Naive thymus-derived CD4-positive, alpha-beta T cell (primary cell): ENCODE measurements at regions of chr22 and their contacts with region 1.

Region 1: DNA sequence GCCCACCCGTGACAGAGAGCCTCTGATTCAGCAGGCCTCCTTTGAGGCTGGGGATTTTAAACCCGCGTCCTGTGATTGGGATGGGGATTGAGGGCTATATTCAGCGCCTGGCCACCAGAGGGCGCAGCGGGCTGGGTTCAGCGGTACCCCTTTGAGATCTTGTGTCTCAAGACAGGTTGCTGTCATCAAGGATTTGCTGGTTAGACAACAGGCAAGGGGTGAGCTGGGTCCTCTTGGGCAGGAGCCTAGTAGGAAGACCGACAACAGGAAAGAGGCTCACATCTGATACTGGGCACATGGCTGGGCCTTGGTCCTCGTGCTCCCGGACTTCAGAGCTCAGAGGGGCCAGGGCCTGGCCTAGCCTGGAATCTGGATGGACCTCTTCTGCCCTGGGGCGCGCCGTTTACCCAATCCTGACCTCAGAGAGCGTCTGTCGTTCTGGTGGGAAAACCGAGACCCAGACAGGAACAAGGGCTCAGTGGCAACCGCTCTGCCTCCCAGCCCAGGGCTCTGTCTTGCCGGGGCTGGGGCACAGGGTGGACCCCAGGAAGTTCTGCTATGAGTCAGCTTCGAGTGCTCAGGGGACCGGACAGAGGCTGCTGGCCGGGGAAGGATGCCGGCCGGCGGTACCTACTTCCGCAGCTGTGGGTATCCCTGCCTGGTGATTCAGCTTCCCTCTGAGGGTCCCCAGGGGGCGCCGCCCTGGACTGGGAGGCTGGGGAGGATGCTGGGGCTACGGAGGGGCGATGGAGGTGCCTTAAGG is 929 bp upstream of the SLC35E4 start:
- DNase-seq: peak; percentile 79 to 91 (median 88)
- ATAC-seq: peak; percentile 76
- H3K4me3 ChIP-seq: peak overlapping the region; percentile 77
- H3K4me3 Mint-ChIP-seq: peak overlapping the region; percentile 77 to 92 (median 83)
- H3K27ac ChIP-seq: peak overlapping the region; percentile 70
- H3K27ac Mint-ChIP-seq: peak overlapping the region; percentile 75 to 93 (median 85)
- H3K4me1 ChIP-seq: peaks cover 18 to 27% of the 10 kb centered on the region in 2 donors
- H3K4me1 Mint-ChIP-seq: peaks cover 13 to 25% (median 23%) of the 10 kb centered on the region in 7 donors
- H3K27me3 ChIP-seq: no peaks in the 10 kb centered on the region
- H3K27me3 Mint-ChIP-seq: no peaks in the 10 kb centered on the region

Region 2: DNA sequence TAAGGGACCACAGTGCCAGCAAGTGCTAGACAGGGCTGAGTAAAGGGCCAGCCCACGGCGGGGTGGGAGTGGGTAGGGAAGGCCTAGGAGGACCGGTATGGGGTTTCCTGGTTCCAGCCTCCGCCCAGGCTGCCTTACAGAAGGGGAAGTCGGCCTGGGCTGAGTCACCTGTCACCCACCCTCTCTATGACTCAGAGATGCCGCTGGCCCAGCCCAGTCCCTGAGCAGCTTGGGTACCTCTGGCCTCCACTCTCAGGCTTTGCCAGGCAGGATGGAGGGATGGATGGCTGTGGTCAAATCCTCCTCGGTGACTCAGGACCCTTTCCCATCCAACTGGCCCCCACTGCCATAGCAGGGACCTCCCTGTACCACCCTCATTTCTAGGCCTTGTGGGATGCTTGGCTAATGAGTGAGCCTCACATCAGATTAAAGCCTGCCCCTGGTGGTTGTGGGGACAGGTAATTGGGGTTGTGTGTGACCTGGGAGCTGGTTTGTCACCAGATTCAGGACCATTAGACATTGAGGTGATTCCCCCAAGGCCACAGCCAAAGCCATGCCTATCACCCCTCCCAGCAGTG is 14.9 kb after region 1 on chr22:
- CTCF ChIA-PET with region 1: interaction called, 6 read pairs
- POLR2A ChIA-PET with region 1: interaction called, 4 read pairs
- intact Hi-C with region 1: loop called (anchors 1 to 2 kb)
- DNase-seq: peak in 2 of 9 donors; percentile 16 to 88
- ATAC-seq: peak; percentile 95
- H3K4me3 ChIP-seq: no peak overlapping the region
- H3K4me3 Mint-ChIP-seq: peak overlapping the region in 1 of 10 donors; percentile 23
- H3K27ac ChIP-seq: no peak overlapping the region
- H3K27ac Mint-ChIP-seq: peak overlapping the region in 1 of 9 donors; percentile 87
- H3K4me1 ChIP-seq: no peaks in the 10 kb centered on the region
- H3K4me1 Mint-ChIP-seq: peaks cover 0 to 34% (median 0%) of the 10 kb centered on the region in 7 donors
- H3K27me3 ChIP-seq: no peaks in the 10 kb centered on the region
- H3K27me3 Mint-ChIP-seq: no peaks in the 10 kb centered on the region

Region 3: DNA sequence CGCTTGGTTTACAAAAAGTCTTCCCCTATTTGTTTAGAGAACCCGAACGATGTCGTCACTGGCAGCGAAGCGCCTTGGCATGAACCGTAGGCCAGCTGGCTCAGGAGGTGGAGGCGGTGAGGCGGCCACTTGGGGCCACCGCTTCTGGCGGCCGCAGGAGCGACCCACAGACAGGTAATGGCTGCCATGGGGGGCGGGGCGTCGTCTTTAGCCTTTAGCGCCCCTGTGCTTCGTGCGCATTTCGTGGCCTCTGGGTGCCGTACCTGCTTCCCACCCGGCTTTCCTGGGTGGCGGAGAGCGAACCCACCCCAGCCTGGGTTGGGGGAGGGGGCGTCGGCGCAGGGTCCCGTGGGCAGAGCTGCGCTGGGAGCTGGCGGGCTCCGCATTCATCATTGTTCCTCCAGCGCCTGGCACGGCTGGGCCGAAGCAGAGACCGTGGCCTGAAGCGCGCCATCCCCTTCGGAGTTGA is 59.6 kb after region 1 on chr22:
- CTCF ChIA-PET with region 1: no interaction called
- POLR2A ChIA-PET with region 1: interaction called, 4 read pairs
- intact Hi-C with region 1: loop called in 1 of 2 experiments (anchors 1 kb)
- DNase-seq: peak; percentile 40 to 62 (median 50)
- ATAC-seq: peak; percentile 83
- H3K4me3 ChIP-seq: peak overlapping the region; percentile 77
- H3K4me3 Mint-ChIP-seq: peak overlapping the region; percentile 86 to 98 (median 94)
- H3K27ac ChIP-seq: peak overlapping the region; percentile 57
- H3K27ac Mint-ChIP-seq: peak overlapping the region in 8 of 9 donors; percentile 59 to 92 (median 86)
- H3K4me1 ChIP-seq: peaks cover 6 to 7% of the 10 kb centered on the region in 2 donors
- H3K4me1 Mint-ChIP-seq: peaks cover 0 to 29% (median 19%) of the 10 kb centered on the region in 7 donors
- H3K27me3 ChIP-seq: no peaks in the 10 kb centered on the region
- H3K27me3 Mint-ChIP-seq: peaks cover 0 to 38% (median 4%) of the 10 kb centered on the region in 5 donors

Region 4: GRCh38 chr22:30754971-30755756 is 120.5 kb after region 1 on chr22:
- CTCF ChIA-PET with region 1: interaction called, 56 read pairs
- POLR2A ChIA-PET with region 1: interaction called, 14 read pairs
- intact Hi-C with region 1: loop called in 1 of 2 experiments (anchors 1 kb)
- DNase-seq: peak in 8 of 9 donors; percentile 12 to 44 (median 30)
- ATAC-seq: peak; percentile 67
- H3K4me3 ChIP-seq: no peak overlapping the region
- H3K4me3 Mint-ChIP-seq: no peak overlapping the region
- H3K27ac ChIP-seq: no peak overlapping the region
- H3K27ac Mint-ChIP-seq: no peak overlapping the region
- H3K4me1 ChIP-seq: no peaks in the 10 kb centered on the region
- H3K4me1 Mint-ChIP-seq: peaks cover 0 to 3% (median 0%) of the 10 kb centered on the region in 7 donors
- H3K27me3 ChIP-seq: no peaks in the 10 kb centered on the region
- H3K27me3 Mint-ChIP-seq: peaks cover 0 to 4% (median 0%) of the 10 kb centered on the region in 5 donors

Region 5: DNA sequence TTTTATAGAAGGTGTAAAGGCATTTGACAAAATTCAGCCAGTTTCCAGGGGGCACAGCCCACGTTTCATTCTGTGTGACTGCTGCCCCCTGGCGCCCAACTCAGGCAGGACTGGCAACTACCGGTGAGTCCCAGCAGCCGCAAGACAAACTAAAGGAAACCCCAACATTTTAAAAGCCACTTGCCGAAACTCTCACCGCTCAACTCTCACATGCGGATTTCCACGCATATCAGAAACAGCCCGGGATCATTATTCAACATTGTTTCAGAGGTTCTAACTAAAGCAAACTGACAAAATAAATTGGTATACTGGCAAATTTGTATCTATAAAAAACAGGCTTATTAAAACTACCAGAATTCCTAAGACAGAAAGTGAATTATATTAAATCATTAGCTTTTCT is 285.8 kb after region 1 on chr22:
- CTCF ChIA-PET with region 1: interaction called, 21 read pairs
- POLR2A ChIA-PET with region 1: interaction called, 3 read pairs
- intact Hi-C with region 1: loop called (anchors 1 kb)
- DNase-seq: peak; percentile 65 to 84 (median 78)
- ATAC-seq: peak; percentile 88
- H3K4me3 ChIP-seq: no peak overlapping the region
- H3K4me3 Mint-ChIP-seq: peak overlapping the region; percentile 62 to 89 (median 77)
- H3K27ac ChIP-seq: peak overlapping the region; percentile 43
- H3K27ac Mint-ChIP-seq: peak overlapping the region; percentile 5 to 90 (median 28)
- H3K4me1 ChIP-seq: peaks cover 6 to 16% of the 10 kb centered on the region in 2 donors
- H3K4me1 Mint-ChIP-seq: peaks cover 4 to 29% (median 21%) of the 10 kb centered on the region in 7 donors
- H3K27me3 ChIP-seq: no peaks in the 10 kb centered on the region
- H3K27me3 Mint-ChIP-seq: peaks cover 0 to 2% (median 0%) of the 10 kb centered on the region in 5 donors

Region 6: GRCh38 chr22:31107178-31107893 is 472.7 kb after region 1 on chr22 and contains the start of gene SELENOM:
- CTCF ChIA-PET with region 1: no interaction called
- POLR2A ChIA-PET with region 1: interaction called, 3 read pairs
- intact Hi-C with region 1: loop called in 1 of 2 experiments (anchors 1 kb)
- DNase-seq: peak; percentile 73 to 89 (median 84)
- ATAC-seq: peak; percentile 98
- H3K4me3 ChIP-seq: peak within 1 kb of the TSS; percentile 94
- H3K4me3 Mint-ChIP-seq: peak within 1 kb of the TSS; percentile 88 to 98 (median 93)
- H3K27ac ChIP-seq: peak within 1 kb of the TSS; percentile 86
- H3K27ac Mint-ChIP-seq: peak within 1 kb of the TSS; percentile 81 to 96 (median 90)
- H3K4me1 ChIP-seq: peaks cover 8 to 16% of the 10 kb centered on the region in 2 donors
- H3K4me1 Mint-ChIP-seq: peaks cover 12 to 26% (median 20%) of the 10 kb centered on the region in 7 donors
- H3K27me3 ChIP-seq: no peaks in the 10 kb centered on the region
- H3K27me3 Mint-ChIP-seq: peaks cover 0 to 3% (median 0%) of the 10 kb centered on the region in 5 donors
- total RNA-seq, gene SELENOM: 9.1 to 71.5 (median 68.6) TPM